Colonic mucosa (tissue), 4 donors: ENCODE measurements at regions of chr11 and their contacts with region 1.

Region 1: GRCh38 chr11:68206187-68206601 is 6.9 kb downstream of the KMT5B start:
- DNase-seq: no peak
- H3K4me3 ChIP-seq: no peak overlapping the region
- H3K27ac ChIP-seq: no peak overlapping the region
- H3K4me1 ChIP-seq: peaks cover 14% of the 10 kb centered on the region
- H3K27me3 ChIP-seq: no peaks in the 10 kb centered on the region
- CTCF ChIP-seq: peak; percentile 73

Region 2: GRCh38 chr11:68040101-68040956 is 165.9 kb before region 1 on chr11:
- intact Hi-C with region 1: loop called (anchors 10 kb)
- DNase-seq: peak; percentile 78
- H3K4me3 ChIP-seq: peak overlapping the region; percentile 86
- H3K27ac ChIP-seq: peak overlapping the region; percentile 70
- H3K4me1 ChIP-seq: peaks cover 18% of the 10 kb centered on the region
- H3K27me3 ChIP-seq: no peaks in the 10 kb centered on the region
- CTCF ChIP-seq: no peak

Region 3: DNA sequence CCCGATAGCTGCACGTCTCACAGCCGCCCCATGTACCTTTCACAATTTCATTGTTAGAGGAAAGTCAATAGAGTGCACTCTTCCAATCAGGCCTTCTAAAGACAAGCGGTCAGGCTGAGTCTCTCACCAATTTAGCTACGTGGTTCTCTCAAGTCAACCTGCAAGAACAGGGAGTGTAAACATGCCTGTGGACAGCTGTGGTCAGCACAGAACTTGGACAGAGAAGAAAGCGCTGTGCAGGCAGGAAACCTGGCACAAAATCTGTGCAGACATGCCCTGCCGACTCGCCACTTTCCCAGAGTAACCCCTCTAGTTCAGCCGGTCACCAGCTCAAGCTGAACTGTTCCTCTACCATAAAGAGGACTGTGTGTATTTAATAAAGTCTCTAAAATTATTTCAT is 124.5 kb before region 1 on chr11:
- intact Hi-C with region 1: loop called (anchors 10 kb)
- DNase-seq: no peak
- H3K4me3 ChIP-seq: no peak overlapping the region
- H3K27ac ChIP-seq: no peak overlapping the region
- H3K4me1 ChIP-seq: no peaks in the 10 kb centered on the region
- H3K27me3 ChIP-seq: no peaks in the 10 kb centered on the region
- CTCF ChIP-seq: no peak

Region 4: GRCh38 chr11:68106165-68106957 is 99.8 kb before region 1 on chr11:
- intact Hi-C with region 1: no loop called
- DNase-seq: peak; percentile 90
- H3K4me3 ChIP-seq: no peak overlapping the region
- H3K27ac ChIP-seq: peak overlapping the region; percentile 77
- H3K4me1 ChIP-seq: peaks cover 13% of the 10 kb centered on the region
- H3K27me3 ChIP-seq: no peaks in the 10 kb centered on the region
- CTCF ChIP-seq: no peak